Naive thymus-derived CD8-positive, alpha-beta T cell (primary cell): ENCODE measurements at regions of chr11 and their contacts with region 1.

Region 1: GRCh38 chr11:92340839-92341238 is 116.2 kb downstream of the FAT3 start:
- DNase-seq: no peak
- ATAC-seq: no peak
- H3K4me3 Mint-ChIP-seq: no peak overlapping the region
- H3K27ac Mint-ChIP-seq: no peak overlapping the region
- H3K4me1 Mint-ChIP-seq: no peaks in the 10 kb centered on the region
- H3K27me3 Mint-ChIP-seq: no peaks in the 10 kb centered on the region

Region 2: DNA sequence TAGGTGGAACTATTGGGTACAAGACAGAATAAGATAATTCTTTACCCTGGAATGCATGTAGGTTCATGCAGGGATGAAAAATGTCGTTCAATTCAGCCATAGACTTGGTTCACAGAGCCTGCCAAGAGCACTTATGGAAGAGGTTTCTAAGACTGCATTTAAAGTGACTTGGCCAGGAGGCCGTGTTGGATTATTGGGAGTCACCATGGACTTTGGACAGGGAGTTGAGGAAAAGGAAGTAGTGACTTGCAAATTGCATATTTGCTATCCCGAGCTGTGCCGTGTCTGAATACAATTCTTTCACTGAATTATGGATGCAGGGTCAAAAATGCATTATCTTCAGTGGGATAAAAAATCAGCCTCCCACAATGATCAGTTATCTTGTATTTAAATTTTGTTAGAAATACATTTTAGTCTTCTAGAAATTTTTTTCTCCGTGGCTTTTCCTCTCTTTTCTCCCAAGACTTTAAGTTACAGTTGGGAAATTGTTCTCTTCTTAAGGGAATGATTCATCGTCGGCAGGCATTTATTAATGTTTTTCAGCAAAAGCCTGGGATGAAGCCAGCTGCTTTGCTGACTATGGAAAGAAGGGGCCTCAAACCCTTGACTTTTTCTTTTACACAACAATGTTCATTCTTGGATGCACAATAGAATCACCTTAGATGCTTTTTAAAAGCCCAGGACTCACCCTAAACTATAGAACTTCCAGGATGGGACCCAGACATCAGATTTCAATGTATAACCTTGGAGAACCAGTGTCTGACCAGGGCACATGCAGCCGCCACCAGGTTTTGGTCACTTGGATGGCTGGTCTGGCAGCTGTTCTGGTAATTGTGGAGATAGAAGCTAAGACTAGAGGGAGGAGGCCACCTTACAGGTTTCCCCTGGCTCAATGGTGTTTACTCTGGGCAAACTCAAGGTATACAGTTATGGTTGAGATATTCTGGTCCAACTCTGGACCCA is 45.4 kb before region 1 on chr11:
- POLR2A ChIA-PET with region 1: no interaction called
- DNase-seq: no peak
- ATAC-seq: no peak
- H3K4me3 Mint-ChIP-seq: no peak overlapping the region
- H3K27ac Mint-ChIP-seq: no peak overlapping the region
- H3K4me1 Mint-ChIP-seq: no peaks in the 10 kb centered on the region
- H3K27me3 Mint-ChIP-seq: peaks cover 0 to 3% (median 0%) of the 10 kb centered on the region in 5 donors

Region 3: GRCh38 chr11:92473736-92474135 is 132.9 kb after region 1 on chr11:
- POLR2A ChIA-PET with region 1: interaction called, 11 read pairs
- DNase-seq: no peak
- ATAC-seq: no peak
- H3K4me3 Mint-ChIP-seq: no peak overlapping the region
- H3K27ac Mint-ChIP-seq: no peak overlapping the region
- H3K4me1 Mint-ChIP-seq: no peaks in the 10 kb centered on the region
- H3K27me3 Mint-ChIP-seq: peaks cover 0 to 2% (median 0%) of the 10 kb centered on the region in 5 donors